H1 (cell line): ENCODE measurements at regions of chr20 and their contacts with region 1.

Region 1: GRCh38 chr20:18995455-18995854 is 181.9 kb downstream of the SCP2D1 start:
- DNase-seq: no peak
- H3K4me3 ChIP-seq: no peak overlapping the region
- H3K27ac ChIP-seq: no peak overlapping the region
- H3K4me1 ChIP-seq: no peaks in the 10 kb centered on the region
- H3K27me3 ChIP-seq: no peaks in the 10 kb centered on the region
- CTCF ChIP-seq: no peak
- EP300 ChIP-seq: no peak
- POLR2A ChIP-seq: no peak
- RAD21 ChIP-seq: no peak

Region 2: DNA sequence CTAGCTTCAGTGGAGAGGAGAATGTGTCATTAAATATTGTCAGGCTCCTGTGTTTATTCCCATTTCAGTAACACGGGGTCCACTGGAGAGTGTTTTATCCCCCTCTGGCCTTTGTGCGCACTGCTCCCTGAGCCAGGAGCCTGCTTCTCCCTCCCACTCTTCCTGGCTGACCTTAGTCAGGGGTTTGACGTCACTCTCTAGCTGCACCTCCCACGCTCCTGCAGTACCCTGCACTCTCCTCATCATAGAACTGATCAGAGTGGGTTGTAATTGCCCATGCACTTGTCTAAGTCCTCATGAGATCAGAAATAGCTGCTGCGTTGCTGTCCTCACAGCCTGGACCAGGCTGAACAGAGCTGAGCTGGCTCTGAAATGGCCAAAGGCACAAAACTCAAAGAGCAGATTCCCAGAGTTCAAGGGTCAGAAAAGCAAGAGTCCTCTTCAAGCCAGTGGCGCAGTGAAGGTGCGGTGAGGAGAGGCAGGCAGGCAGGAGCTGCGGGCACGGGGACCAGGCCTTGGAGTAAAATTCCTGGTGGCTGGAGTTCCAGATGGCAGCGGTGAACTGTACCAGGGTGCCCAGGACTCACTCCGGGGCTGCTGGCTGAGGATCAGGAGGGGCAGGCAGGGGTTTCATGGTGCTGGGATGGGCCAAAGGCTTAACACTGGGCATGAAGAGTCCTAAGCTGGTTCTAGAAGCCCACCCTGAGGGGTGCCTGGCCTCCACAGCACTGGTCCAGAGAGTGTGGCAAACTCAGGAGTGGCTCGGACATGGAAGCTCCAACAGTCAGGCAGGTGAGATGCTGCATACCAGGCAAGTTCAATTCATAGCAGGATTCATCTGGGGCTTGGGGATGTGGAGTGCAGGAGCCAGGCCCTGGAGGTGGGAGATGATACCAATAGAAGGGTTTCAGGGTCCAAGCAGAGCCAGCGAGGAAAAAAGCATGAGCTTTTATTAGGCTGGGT is 10.9 kb before region 1 on chr20:
- CTCF ChIA-PET with region 1: interaction called, 10 read pairs
- POLR2A ChIA-PET with region 1: no interaction called
- DNase-seq: no peak
- H3K4me3 ChIP-seq: no peak overlapping the region
- H3K27ac ChIP-seq: no peak overlapping the region
- H3K4me1 ChIP-seq: peaks cover 0 to 2% (median 0%) of the 10 kb centered on the region in 4 experiments; a peak in 2 of 7 replicates
- H3K27me3 ChIP-seq: no peaks in the 10 kb centered on the region
- CTCF ChIP-seq: no peak
- EP300 ChIP-seq: no peak
- POLR2A ChIP-seq: no peak
- RAD21 ChIP-seq: no peak

Region 3: DNA sequence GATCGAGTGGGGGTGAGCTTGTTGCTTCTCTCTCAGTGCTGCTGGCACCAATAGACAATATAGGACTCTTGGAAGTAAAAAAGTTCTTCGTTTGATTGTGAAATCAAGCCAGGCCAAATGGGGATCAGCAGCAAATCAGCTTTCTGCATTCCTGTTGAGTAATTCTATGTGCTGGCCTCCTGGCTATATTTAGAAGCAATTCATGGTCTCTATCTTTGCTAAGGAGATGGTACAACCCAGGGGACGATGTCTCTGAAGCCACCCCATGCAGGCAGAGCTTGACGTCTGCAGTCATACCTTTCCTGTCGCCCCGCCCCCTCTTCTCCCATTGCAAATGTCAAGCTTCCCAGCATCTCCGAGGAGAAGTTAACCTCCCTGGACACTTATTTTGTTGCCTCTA is 17.2 kb after region 1 on chr20:
- CTCF ChIA-PET with region 1: no interaction called
- POLR2A ChIA-PET with region 1: no interaction called
- DNase-seq: peak in 1 of 2 experiments; percentile 33
- H3K4me3 ChIP-seq: no peak overlapping the region
- H3K27ac ChIP-seq: no peak overlapping the region
- H3K4me1 ChIP-seq: peaks cover 0 to 5% (median 2%) of the 10 kb centered on the region in 4 experiments; a peak in 3 of 7 replicates
- H3K27me3 ChIP-seq: no peaks in the 10 kb centered on the region
- CTCF ChIP-seq: no peak
- EP300 ChIP-seq: no peak
- POLR2A ChIP-seq: no peak
- RAD21 ChIP-seq: no peak